Right ventricle myocardium inferior (tissue), 1 donor: ENCODE measurements at regions of chr9 and their contacts with region 1.

Region 1: DNA sequence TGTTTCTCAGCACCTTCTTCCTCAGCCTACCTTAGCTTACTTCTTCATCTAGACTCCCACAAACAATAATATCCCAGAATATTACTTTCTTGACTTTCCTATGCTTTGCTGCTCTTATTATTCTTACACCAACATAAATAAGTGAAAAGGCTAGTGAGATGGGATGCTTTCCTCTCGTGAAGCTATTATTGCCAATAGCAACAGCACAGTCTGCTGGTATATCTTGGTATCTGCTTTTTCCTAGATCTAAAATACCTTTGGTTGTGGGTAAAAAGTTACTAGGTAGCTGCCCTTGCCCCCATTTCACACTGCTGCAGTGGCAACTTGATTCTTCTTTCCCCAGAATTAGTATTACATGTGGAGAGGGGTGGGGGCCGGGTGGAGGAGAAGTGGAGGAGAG is 26.1 kb upstream of the GLIPR2 start:
- DNase-seq: no peak
- ATAC-seq: no peak

Region 2: DNA sequence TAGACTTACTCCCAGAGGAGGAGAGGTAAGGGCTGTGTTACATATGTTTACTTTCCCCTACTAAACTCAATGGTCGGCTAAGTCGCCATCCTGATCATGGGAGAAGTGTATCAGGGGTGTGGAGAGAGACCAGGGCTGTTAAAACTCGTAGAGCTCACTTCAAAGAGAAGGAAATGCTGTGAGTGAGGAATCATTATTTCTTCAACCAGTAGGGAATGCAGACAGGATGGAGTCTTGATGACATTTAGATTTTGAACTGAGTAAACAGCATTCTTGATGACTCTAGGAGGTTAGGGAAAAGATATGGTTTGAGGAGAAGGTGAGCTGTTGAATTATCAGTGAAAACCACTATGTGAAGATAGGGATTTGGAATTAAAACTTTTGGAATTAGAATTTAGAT is 56.5 kb before region 1 on chr9:
- intact Hi-C with region 1: loop called (anchors 10 kb)
- DNase-seq: no peak
- ATAC-seq: no peak